Keratinocyte (primary cell): ENCODE measurements at regions of chr7 and their contacts with region 1.

Region 1: DNA sequence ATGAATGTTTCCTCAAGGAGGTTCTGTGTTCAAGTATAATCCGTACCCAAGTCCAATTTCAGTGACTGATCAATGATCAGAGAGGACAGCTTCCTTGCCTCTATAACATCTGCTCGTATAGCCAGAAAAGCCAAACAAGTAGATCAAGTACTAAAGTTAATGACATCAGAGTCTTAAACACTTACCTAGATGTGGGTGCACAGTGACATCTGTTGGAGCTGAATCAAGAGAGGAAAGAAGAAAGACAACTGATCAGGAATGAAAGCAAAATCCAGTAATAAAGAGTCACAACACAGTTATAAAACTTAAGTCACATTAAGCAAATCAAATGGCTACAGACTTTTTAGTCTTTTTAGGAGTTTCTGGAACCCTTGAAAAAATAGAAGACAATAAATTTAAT is 236.5 kb downstream of the RELN start:
- DNase-seq: no peak
- H3K4me3 ChIP-seq: no peak overlapping the region
- H3K27ac ChIP-seq: no peak overlapping the region
- H3K4me1 ChIP-seq: no peaks in the 10 kb centered on the region
- H3K27me3 ChIP-seq: no peaks in the 10 kb centered on the region
- CTCF ChIP-seq: peak in 1 of 3 experiments; percentile 33

Region 2: GRCh38 chr7:103480786-103481185 is 272.2 kb before region 1 on chr7:
- dilution Hi-C with region 1: no loop called
- DNase-seq: no peak
- H3K4me3 ChIP-seq: no peak overlapping the region
- H3K27ac ChIP-seq: no peak overlapping the region
- H3K4me1 ChIP-seq: no peaks in the 10 kb centered on the region
- H3K27me3 ChIP-seq: no peaks in the 10 kb centered on the region
- CTCF ChIP-seq: no peak

Region 3: DNA sequence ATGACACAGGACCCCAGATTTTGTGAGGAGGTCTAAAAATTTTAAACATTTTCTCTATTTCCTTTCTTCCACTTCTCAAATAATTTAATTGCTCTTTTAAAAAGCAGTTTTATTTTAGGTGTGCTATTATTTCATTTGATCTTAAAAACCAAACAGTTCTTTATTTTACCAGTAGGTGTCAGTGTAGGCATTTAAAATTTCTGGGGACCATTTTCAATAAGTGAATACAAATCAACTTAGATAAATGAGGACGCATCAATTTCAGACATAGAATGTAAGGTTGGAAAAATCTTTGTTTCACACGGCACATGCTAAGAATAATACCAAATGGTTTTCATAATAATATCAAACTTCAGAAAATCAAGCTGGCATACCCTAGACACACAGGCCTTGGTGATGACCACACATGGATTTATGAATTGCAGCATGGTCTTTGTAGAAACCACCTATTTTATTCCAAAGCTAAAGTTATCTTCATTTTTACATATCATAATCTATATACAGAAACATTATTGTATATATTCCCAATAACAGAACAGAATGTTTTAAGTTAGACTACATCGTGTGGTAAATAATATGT is 179.4 kb before region 1 on chr7:
- dilution Hi-C with region 1: loop called (anchors 25 kb)
- DNase-seq: no peak
- H3K4me3 ChIP-seq: no peak overlapping the region
- H3K27ac ChIP-seq: no peak overlapping the region
- H3K4me1 ChIP-seq: no peaks in the 10 kb centered on the region
- H3K27me3 ChIP-seq: no peaks in the 10 kb centered on the region
- CTCF ChIP-seq: peak in 2 of 3 experiments; percentile 10 to 28

Region 4: GRCh38 chr7:104306793-104307192 is 553.8 kb after region 1 on chr7:
- dilution Hi-C with region 1: no loop called
- DNase-seq: no peak
- H3K4me3 ChIP-seq: no peak overlapping the region
- H3K27ac ChIP-seq: no peak overlapping the region
- H3K4me1 ChIP-seq: no peaks in the 10 kb centered on the region
- H3K27me3 ChIP-seq: no peaks in the 10 kb centered on the region
- CTCF ChIP-seq: no peak